Activated CD4-positive, alpha-beta T cell treated with anti-CD3 and anti-CD28 coated beads, Interleukin-2, amount 10 ng/mL, durations not matched to agents 24 days and 14 days (primary cell): ENCODE measurements at regions of chr2 and their contacts with region 1.

Region 1: GRCh38 chr2:71545572-71546274 is 92.4 kb downstream of the DYSF start:
- DNase-seq: peak; percentile 79
- H3K4me3 Mint-ChIP-seq: peak overlapping the region; percentile 45
- H3K27ac Mint-ChIP-seq: no peak overlapping the region
- H3K4me1 Mint-ChIP-seq: peaks cover 4% of the 10 kb centered on the region
- H3K27me3 Mint-ChIP-seq: peaks cover 2% of the 10 kb centered on the region

Region 2: DNA sequence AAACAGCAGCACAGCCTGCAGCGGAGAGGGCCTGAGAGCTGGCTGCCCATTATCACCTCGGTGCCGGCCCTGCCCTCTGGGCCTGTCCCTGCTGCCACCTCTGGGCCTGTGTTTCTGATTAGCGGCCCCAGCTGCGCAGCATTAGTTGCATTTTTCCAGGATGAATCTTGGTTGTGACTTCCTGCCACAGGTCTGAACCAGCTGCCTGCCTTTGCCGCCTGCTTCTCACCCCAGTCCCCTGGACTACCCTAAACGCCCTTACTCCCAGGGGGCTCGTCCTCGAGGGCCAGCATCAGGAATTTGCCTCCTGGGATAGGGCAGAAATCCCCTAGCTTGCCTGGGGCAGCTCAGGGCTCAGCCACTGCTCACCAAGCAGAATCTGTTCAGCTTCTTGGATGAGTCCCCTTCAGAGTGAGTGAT is 250.5 kb after region 1 on chr2:
- intact Hi-C with region 1: loop called (anchors 2 kb)
- DNase-seq: no peak
- H3K4me3 Mint-ChIP-seq: no peak overlapping the region
- H3K27ac Mint-ChIP-seq: no peak overlapping the region
- H3K4me1 Mint-ChIP-seq: no peaks in the 10 kb centered on the region
- H3K27me3 Mint-ChIP-seq: no peaks in the 10 kb centered on the region

Region 3: DNA sequence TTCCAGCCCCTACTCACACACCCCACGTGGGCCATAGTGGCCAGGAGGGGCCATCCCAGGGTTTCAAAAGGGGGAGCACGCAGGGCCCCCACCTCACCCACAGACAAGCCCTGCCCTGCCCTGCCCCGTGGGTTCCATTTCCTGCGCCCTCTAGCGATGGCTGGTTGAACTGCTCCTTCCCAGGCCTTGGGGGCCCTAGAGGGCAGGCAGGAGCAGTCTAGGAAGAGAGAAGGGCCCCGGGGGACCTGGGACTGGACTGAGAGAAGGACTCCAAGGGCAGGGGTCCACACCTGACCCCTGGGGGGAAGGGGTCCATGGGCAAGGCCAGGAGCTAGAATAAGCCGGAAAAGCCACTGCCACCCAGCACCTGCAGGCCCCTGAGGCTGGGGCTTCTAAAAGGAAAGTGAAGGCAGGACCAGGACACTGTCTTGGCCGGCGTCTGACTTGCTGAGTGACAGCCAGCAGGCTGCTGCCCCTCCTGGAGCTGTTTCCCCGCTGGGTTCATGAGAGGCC is 591.8 kb after region 1 on chr2:
- intact Hi-C with region 1: loop called (anchors 1 kb)
- DNase-seq: peak; percentile 89
- H3K4me3 Mint-ChIP-seq: no peak overlapping the region
- H3K27ac Mint-ChIP-seq: no peak overlapping the region
- H3K4me1 Mint-ChIP-seq: no peaks in the 10 kb centered on the region
- H3K27me3 Mint-ChIP-seq: peaks cover 6% of the 10 kb centered on the region

Region 4: DNA sequence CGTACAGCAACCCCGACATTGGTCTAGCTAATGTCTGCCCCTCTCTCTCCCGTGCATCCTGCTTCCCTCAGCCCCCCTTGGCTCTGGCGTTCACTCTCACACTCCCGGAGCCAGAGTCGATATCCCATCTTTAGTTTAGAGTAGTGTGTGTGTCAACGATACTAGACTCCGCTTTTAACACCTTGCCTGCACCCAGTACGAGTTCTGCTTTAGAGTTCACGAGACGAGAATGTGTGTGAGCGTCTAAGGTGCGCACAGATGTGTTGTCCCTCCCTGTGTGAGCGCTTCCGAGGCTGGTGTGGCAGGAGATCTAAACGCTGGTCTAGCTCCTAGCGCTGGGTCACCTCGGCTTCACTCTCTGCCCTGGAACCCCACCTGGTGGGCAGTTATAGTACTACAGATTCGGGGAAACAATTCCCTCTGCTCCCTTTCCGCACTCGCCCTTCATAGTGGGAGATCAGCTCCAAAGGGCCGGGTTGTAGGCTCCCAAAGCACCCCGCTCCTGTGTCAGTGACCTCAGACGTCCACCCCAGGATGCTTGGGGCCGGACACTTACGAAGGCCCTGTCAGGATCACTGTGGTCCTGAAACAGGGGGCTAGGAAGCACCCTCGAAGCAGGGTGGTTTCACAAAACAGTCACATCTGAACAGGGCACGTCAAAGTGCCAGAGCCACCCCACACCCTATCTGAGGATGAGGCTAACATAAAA is 604.6 kb after region 1 on chr2:
- intact Hi-C with region 1: loop called (anchors 1 kb)
- DNase-seq: peak; percentile 89
- H3K4me3 Mint-ChIP-seq: peak overlapping the region; percentile 69
- H3K27ac Mint-ChIP-seq: peak overlapping the region; percentile 63
- H3K4me1 Mint-ChIP-seq: peaks cover 21% of the 10 kb centered on the region
- H3K27me3 Mint-ChIP-seq: peaks cover 48% of the 10 kb centered on the region